ENCODE measurements at regions of chr19 and their contacts with region 1.

Region 1: DNA sequence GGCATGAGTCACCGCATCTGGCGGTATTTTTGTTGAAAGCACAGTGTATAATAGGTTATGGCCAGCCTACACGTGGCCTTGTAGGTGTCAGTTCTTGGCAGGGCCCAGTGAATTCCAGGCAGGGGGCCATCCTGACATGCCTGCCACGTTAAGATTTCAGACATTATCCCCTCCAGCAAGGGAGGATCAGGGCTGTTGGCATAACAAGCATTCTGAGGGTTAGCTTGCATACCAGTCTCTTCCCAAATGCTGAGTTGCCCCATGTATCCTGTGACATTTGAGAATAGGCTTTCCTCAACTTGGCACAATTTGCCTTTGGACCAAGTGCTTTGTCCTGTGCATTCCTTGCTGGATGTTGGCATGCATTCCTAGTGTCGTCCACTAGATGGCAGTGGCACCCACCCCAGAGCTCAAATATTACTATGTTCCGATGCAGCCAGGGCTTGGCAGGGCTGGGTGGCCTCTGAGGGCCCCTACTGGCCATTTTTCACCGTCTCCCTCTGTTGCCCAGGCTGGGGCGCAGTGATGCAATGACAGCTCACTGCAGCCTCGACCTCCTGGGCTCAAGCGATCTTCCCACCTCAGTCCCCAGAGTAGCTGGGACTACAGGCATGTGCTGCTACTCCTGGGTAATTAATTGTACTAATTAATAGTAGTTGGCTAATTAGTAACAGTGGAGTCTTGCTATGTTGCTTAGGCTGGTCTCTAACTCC is 31.2 kb downstream of the NLRP12 start:
- DNase-seq: peak; percentile 86
- H3K4me3 Mint-ChIP-seq: no peak overlapping the region
- H3K27ac Mint-ChIP-seq: no peak overlapping the region
- H3K4me1 Mint-ChIP-seq: no peaks in the 10 kb centered on the region
- H3K27me3 Mint-ChIP-seq: no peaks in the 10 kb centered on the region

Region 2: DNA sequence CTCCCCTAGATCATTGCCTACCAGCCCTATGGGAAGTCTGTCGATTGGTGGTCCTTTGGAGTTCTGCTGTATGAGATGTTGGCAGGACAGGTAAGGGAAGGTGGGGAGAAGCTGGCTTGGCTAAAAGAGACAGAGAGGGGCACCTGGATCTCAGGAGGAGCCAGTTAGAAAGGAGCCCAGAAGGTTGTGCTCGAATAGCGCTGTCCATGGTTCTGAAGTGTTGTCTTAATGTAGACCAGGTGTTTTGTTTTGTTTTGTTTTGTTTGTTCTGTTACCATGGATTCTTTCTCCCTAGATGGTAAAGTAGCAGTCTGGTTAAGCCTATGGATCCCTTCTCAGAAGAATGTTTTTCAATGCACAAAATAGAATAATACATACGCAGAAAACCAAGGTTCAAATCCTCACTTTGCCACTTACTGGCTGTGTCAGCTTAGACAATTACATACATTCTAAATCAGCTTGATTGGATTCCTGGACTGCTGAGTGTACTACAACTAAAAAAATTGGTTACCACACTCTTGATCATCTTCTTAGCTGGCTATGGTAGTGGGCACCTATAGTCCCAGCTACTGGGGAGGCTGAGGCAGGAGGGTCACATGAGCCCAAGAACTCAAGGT is 110.3 kb after region 1 on chr19:
- CTCF ChIA-PET with region 1: no interaction called
- DNase-seq: peak; percentile 70
- H3K4me3 Mint-ChIP-seq: no peak overlapping the region
- H3K27ac Mint-ChIP-seq: no peak overlapping the region
- H3K4me1 Mint-ChIP-seq: peaks cover 21% of the 10 kb centered on the region
- H3K27me3 Mint-ChIP-seq: peaks cover 71% of the 10 kb centered on the region

Region 3: GRCh38 chr19:53977429-53977990 is 184.6 kb after region 1 on chr19:
- CTCF ChIA-PET with region 1: no interaction called
- DNase-seq: peak; percentile 74
- H3K4me3 Mint-ChIP-seq: peak overlapping the region; percentile 48
- H3K27ac Mint-ChIP-seq: peak overlapping the region; percentile 67
- H3K4me1 Mint-ChIP-seq: peaks cover 29% of the 10 kb centered on the region
- H3K27me3 Mint-ChIP-seq: peaks cover 64% of the 10 kb centered on the region

Region 4: GRCh38 chr19:54023191-54023590 is 230.3 kb after region 1 on chr19:
- CTCF ChIA-PET with region 1: interaction called, 31 read pairs
- DNase-seq: no peak
- H3K4me3 Mint-ChIP-seq: no peak overlapping the region
- H3K27ac Mint-ChIP-seq: no peak overlapping the region
- H3K4me1 Mint-ChIP-seq: peaks cover 3% of the 10 kb centered on the region
- H3K27me3 Mint-ChIP-seq: peaks cover 37% of the 10 kb centered on the region

Region 5: GRCh38 chr19:54029930-54030490 is 237.1 kb after region 1 on chr19:
- CTCF ChIA-PET with region 1: interaction called, 31 read pairs
- DNase-seq: peak; percentile 72
- H3K4me3 Mint-ChIP-seq: no peak overlapping the region
- H3K27ac Mint-ChIP-seq: no peak overlapping the region
- H3K4me1 Mint-ChIP-seq: no peaks in the 10 kb centered on the region
- H3K27me3 Mint-ChIP-seq: peaks cover 5% of the 10 kb centered on the region